ENCODE measurements at regions of chr2 and their contacts with region 1.

Region 1: DNA sequence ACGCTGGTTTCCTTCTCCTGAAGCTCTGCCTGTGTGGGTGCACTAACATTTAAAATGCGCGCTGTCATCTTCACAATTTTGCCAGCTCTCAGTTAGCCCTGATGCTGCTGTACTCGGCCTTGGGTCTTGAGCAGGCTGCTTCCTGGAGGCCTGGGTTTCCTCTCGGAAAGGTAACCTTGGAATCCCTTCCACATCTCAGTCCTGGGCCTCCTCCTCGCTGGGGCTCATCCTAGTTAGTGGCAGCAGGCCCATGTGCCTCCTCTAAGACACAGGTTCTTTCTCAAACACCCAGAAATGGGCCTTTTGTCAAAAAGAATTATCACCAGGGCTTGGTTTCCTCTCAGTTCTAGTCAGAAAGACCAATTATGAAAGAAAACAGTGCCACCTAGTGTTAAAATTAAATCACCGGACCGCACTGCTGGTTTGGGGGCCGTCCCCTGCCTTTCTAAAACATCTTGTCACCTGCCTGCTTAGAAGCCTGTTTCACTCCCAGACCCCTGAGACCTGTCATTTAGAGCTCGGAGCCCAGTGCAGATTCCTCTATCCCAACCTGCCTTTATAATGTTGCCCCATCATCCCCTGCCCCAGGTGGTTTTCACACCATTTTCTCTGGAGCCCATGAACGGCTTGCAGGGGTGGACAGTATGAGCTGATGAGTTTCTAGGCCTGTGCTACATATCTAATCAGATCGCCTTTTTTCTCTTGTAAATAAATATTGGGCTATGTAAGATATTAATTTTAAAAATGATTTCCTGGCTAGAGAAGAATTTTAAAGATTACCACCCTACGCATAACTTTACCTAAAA is 42.4 kb downstream of the HK2 start:
- DNase-seq: peak in 1 of 3 donors; percentile 59
- ATAC-seq: peak; percentile 61
- H3K4me3 ChIP-seq: no peak overlapping the region
- H3K4me1 ChIP-seq: peaks cover 9% of the 10 kb centered on the region
- CTCF ChIP-seq: peak; percentile 42

Region 2: DNA sequence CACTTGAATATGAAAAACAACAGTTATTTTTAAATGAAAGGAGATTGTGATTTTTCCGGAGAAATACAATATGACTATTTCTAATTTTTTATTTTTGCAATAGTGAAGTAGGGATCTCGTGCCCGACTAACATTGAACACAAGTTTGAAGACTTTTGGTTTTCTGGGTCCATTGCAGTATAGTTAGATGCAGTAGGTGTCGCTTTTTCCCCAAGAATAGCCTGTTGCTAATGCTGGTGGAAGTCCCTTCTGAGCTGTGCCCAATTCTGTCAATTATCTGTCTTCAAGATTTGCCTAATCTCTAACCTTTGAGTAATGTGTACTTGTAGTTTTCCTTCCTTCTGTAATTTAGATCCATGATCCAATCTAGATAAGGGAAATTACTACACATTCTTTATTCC is 185.7 kb before region 1 on chr2:
- intact Hi-C with region 1: loop called in 1 of 2 experiments (anchors 5 kb)
- DNase-seq: peak in 1 of 3 donors; percentile 74
- ATAC-seq: peak; percentile 39
- H3K4me3 ChIP-seq: no peak overlapping the region
- H3K4me1 ChIP-seq: peaks cover 21% of the 10 kb centered on the region
- CTCF ChIP-seq: peak; percentile 51

Region 3: DNA sequence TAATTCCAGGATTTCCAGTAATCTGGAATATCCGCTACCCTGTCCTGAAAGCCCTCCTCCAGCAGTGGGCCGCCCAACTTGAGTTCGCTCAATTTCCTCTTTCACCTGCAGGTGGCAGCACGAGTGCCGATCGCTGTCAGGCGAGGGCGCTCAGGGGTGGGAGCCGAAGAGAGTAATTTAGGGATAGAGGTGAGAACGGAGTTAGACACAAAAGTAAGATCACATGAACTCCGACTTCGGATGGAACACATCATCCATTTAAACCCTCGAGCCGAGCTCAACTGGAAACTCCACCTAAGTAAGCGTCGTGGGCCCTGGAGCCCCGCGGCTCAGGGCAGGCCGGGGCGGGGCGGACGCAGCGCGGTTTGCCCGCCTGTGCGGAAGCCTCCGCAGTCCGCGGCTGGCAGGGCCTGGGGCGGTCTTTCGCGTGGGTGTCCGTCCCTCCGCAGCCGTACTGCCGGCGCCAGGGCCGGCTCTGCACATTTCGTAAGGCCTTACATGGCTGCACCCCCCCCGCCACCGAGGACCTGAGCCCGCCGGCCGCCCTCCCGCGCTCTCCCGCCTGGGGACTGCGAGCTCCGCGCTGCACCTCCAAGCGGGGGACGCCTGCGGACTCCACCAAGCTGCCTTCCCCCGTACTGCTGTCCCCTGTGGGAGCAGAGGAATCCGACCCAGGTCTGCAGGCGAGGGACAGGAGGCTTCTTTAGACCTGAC is 161.0 kb before region 1 on chr2:
- intact Hi-C with region 1: loop called (anchors 5 kb)
- DNase-seq: peak; percentile 84 to 94 (median 92)
- ATAC-seq: peak; percentile 89
- H3K4me3 ChIP-seq: peak overlapping the region; percentile 27
- H3K4me1 ChIP-seq: no peaks in the 10 kb centered on the region
- CTCF ChIP-seq: peak; percentile 92